PC-9 (cell line): ENCODE measurements at regions of chr10 and their contacts with region 1.

Region 1: GRCh38 chr10:30783939-30784500 is 154.5 kb upstream of the LYZL2 start:
- DNase-seq: peak in 1 of 2 experiments; percentile 67
- H3K4me3 ChIP-seq: no peak overlapping the region
- H3K27ac ChIP-seq: no peak overlapping the region
- H3K4me1 ChIP-seq: no peaks in the 10 kb centered on the region
- H3K27me3 ChIP-seq: no peaks in the 10 kb centered on the region
- CTCF ChIP-seq: peak; percentile 73

Region 2: GRCh38 chr10:30114871-30115625 is 669.0 kb before region 1 on chr10:
- CTCF ChIA-PET with region 1: no interaction called
- POLR2A ChIA-PET with region 1: no interaction called
- intact Hi-C with region 1: no loop called
- DNase-seq: no peak
- H3K4me3 ChIP-seq: no peak overlapping the region
- H3K27ac ChIP-seq: no peak overlapping the region
- H3K4me1 ChIP-seq: no peaks in the 10 kb centered on the region
- H3K27me3 ChIP-seq: no peaks in the 10 kb centered on the region
- CTCF ChIP-seq: no peak

Region 3: DNA sequence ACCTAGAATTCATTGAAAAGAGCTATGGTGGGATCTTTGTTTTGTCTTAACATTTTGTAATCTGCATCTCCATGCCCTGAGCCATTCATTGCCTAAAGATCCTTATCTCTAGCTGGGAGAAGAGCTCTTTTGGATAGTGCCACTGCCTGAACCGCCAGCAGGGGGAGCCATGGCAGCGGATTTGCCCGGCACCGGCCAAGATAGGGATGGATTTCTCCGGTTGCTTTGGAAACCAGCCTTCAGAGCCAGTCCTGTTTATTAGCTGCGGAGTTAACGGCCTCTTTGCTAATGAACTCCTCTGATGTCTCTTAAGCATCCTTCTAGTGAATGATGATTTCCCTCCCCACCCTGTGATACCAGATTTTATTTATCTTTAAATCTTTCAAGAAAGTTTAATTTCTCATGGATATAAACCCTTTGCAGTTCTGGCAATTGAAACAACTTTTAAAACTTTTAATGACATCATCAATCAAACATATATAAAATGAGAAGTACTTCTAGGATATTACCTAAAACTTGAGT is 96.3 kb before region 1 on chr10:
- CTCF ChIA-PET with region 1: interaction called, 6 read pairs
- POLR2A ChIA-PET with region 1: no interaction called
- intact Hi-C with region 1: loop called (anchors 10 kb)
- DNase-seq: peak; percentile 38 to 80
- H3K4me3 ChIP-seq: no peak overlapping the region
- H3K27ac ChIP-seq: no peak overlapping the region
- H3K4me1 ChIP-seq: no peaks in the 10 kb centered on the region
- H3K27me3 ChIP-seq: no peaks in the 10 kb centered on the region
- CTCF ChIP-seq: peak; percentile 90

Region 4: GRCh38 chr10:30742471-30742870 is 41.5 kb before region 1 on chr10:
- CTCF ChIA-PET with region 1: no interaction called
- POLR2A ChIA-PET with region 1: no interaction called
- intact Hi-C with region 1: no loop called
- DNase-seq: no peak
- H3K4me3 ChIP-seq: no peak overlapping the region
- H3K27ac ChIP-seq: no peak overlapping the region
- H3K4me1 ChIP-seq: no peaks in the 10 kb centered on the region
- H3K27me3 ChIP-seq: no peaks in the 10 kb centered on the region
- CTCF ChIP-seq: no peak

Region 5: DNA sequence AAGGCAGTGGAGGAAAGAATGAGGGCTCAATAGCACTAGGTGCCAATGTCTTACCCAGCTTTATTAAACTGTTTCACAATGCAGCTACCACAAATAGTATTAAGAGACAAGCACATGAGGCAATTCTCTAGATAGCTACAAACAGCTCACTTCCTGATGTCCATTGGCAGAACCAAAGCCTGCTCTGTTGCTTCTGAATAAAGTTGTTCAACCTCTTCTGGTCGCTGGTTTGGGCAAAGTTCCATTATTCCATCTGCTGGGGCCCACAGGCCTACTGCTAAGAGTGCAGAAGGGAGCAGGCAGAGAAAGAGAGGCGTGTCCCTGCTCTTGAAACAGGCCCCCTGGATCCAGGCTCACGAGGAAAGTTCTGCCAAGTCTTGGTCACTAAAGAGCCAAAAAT is 73.8 kb after region 1 on chr10:
- CTCF ChIA-PET with region 1: no interaction called
- POLR2A ChIA-PET with region 1: no interaction called
- intact Hi-C with region 1: no loop called
- DNase-seq: no peak
- H3K4me3 ChIP-seq: no peak overlapping the region
- H3K27ac ChIP-seq: no peak overlapping the region
- H3K4me1 ChIP-seq: peaks cover 9% of the 10 kb centered on the region
- H3K27me3 ChIP-seq: no peaks in the 10 kb centered on the region
- CTCF ChIP-seq: no peak

Region 6: DNA sequence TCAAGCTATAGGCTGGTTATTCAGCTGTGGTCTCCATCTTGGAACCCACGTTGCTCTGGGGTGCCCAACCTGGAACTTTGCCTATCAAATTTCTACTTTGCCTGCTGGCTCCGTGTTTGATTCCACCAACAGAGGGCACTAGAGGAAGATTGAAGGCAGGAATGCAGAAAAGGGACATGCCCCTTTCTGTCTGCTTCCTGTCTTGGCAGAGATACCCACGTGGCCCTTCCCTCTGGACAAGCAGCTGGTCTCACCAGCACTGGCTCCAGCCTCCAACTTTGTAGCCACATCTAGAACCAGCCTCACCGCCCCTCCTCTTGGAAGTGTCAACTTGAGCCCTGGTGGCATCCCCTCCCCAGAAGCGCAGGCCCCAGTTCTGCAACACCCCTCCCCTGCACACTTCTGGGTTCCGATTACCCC is 299.8 kb after region 1 on chr10:
- CTCF ChIA-PET with region 1: no interaction called
- POLR2A ChIA-PET with region 1: no interaction called
- intact Hi-C with region 1: loop called (anchors 10 kb)
- DNase-seq: peak in 1 of 2 experiments; percentile 44
- H3K4me3 ChIP-seq: no peak overlapping the region
- H3K27ac ChIP-seq: no peak overlapping the region
- H3K4me1 ChIP-seq: no peaks in the 10 kb centered on the region
- H3K27me3 ChIP-seq: no peaks in the 10 kb centered on the region
- CTCF ChIP-seq: peak; percentile 59

Region 7: GRCh38 chr10:31426401-31426800 is 642.4 kb after region 1 on chr10:
- CTCF ChIA-PET with region 1: no interaction called
- POLR2A ChIA-PET with region 1: no interaction called
- intact Hi-C with region 1: no loop called
- DNase-seq: no peak
- H3K4me3 ChIP-seq: no peak overlapping the region
- H3K27ac ChIP-seq: no peak overlapping the region
- H3K4me1 ChIP-seq: no peaks in the 10 kb centered on the region
- H3K27me3 ChIP-seq: no peaks in the 10 kb centered on the region
- CTCF ChIP-seq: no peak

Region 8: DNA sequence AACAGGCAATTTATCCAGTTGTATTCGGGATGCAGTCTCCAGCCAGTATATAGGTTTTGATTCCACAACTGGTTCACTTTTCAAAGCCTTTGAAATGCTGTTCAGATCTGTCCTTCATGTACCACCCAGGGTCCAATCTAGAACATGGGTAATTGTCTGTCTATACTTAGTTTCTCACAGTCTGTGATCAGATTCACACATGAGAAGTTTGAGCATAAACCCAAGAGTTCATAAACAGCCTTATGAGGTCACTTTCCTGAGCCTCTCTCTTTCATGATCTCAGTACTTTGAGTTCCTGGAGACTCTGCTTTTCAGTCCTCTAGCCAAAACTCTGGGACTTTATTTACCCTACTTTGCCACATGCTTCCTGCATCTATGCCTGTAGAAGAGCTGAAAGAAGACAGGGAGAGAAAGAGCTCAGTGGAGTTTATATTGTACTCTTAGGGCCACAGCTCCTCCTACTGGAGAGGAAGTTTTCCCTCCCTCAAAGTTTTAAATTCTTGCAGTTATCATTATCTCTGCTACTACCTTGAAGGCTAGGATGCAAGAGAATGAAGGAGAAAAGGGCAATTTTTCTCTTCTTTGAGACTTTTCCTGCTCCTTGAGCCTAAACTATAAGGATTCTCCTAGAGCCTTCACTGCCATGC is 707.0 kb after region 1 on chr10:
- CTCF ChIA-PET with region 1: interaction called, 7 read pairs
- POLR2A ChIA-PET with region 1: no interaction called
- intact Hi-C with region 1: loop called (anchors 2 kb)
- DNase-seq: peak in 1 of 2 experiments; percentile 19
- H3K4me3 ChIP-seq: no peak overlapping the region
- H3K27ac ChIP-seq: no peak overlapping the region
- H3K4me1 ChIP-seq: no peaks in the 10 kb centered on the region
- H3K27me3 ChIP-seq: no peaks in the 10 kb centered on the region
- CTCF ChIP-seq: peak; percentile 68

Region 9: GRCh38 chr10:31808258-31809218 is 1024.5 kb after region 1 on chr10:
- CTCF ChIA-PET with region 1: no interaction called
- POLR2A ChIA-PET with region 1: no interaction called
- intact Hi-C with region 1: loop called (anchors 2 kb)
- DNase-seq: no peak
- H3K4me3 ChIP-seq: no peak overlapping the region
- H3K27ac ChIP-seq: 0 out of 2 replicates have a peak overlapping the region, but pooled peaks have one; percentile 18
- H3K4me1 ChIP-seq: no peaks in the 10 kb centered on the region
- H3K27me3 ChIP-seq: no peaks in the 10 kb centered on the region
- CTCF ChIP-seq: peak; percentile 73